ENCODE measurements at regions of chr3 and their contacts with region 1.

Region 1: DNA sequence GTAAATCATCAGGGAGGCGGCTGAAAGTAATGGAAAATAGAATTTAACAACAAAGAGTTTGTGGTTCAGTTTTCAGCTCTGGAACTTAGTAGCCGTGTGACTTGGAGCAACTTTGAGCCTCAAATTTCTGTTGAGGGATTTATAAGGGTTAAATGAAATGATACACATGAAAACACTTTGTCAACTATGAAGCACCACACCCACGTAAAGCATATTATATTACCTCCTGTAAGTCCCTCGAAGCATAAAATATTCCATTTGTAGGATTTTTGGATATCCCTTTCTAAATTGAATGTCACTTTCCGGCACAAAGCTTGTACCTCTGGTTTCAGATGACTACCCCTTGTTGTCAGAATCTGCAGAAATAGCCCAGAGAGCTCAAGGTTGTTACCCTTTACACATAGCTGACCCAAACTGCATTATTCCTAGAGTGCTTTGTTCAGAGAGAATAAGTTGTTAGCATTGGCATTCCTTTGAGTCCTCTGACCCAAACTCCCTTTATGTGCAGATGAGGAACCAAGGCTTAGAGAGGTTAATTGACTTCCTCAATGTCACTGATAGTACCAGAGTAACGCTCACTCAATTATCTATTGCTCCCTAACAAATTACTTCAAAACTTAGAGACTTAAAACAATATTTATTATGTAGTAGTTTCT is 187.9 kb upstream of the UMPS start:
- DNase-seq: no peak
- ATAC-seq: no peak
- H3K4me3 ChIP-seq: no peak overlapping the region
- H3K27ac ChIP-seq: no peak overlapping the region
- H3K4me1 ChIP-seq: peaks cover 0 to 13% (median 0%) of the 10 kb centered on the region in 9 donors
- H3K27me3 ChIP-seq: no peaks in the 10 kb centered on the region
- CTCF ChIP-seq: no peak

Region 2: DNA sequence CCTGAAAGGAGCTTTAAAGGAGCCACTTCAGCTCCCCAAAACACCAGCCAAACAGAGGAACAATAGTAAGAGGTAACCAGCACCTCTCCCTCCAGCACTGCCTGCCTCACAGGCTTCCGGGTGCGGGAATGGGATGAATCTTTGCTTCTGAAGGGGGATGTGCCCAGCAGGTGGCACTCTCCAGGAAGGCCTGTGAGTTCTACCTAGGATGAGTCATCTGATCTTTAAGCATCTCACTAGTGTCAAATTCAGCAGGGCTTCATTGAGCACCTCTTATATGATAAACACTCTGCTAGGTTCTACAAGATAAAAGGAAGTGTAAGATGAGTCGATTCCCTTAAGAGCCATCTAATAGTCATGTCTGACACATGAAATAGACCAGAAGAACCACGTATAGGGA is 49.5 kb before region 1 on chr3:
- intact Hi-C with region 1: loop called in 3 of 10 experiments (anchors 5 to 10 kb)
- DNase-seq: peak in 1 of 2 donors; percentile 23
- ATAC-seq: peak in 7 of 8 donors; percentile 35 to 74 (median 61)
- H3K4me3 ChIP-seq: no peak overlapping the region
- H3K27ac ChIP-seq: no peak overlapping the region
- H3K4me1 ChIP-seq: peaks cover 0 to 8% (median 0%) of the 10 kb centered on the region in 9 donors
- H3K27me3 ChIP-seq: no peaks in the 10 kb centered on the region
- CTCF ChIP-seq: peak in 8 of 9 donors; percentile 12 to 58 (median 46)

Region 3: GRCh38 chr3:124504332-124505059 is 37.8 kb before region 1 on chr3:
- intact Hi-C with region 1: loop called in 2 of 10 experiments (anchors 5 to 10 kb)
- DNase-seq: peak; percentile 20 to 27
- ATAC-seq: peak; percentile 66 to 97 (median 88)
- H3K4me3 ChIP-seq: no peak overlapping the region
- H3K27ac ChIP-seq: peak overlapping the region in 4 of 10 donors; percentile 16 to 22 (median 20)
- H3K4me1 ChIP-seq: peaks cover 0 to 14% (median 6%) of the 10 kb centered on the region in 9 donors
- H3K27me3 ChIP-seq: no peaks in the 10 kb centered on the region
- CTCF ChIP-seq: no peak

Region 4: GRCh38 chr3:124520970-124521369 is 21.4 kb before region 1 on chr3:
- intact Hi-C with region 1: no loop called
- DNase-seq: no peak
- ATAC-seq: no peak
- H3K4me3 ChIP-seq: no peak overlapping the region
- H3K27ac ChIP-seq: no peak overlapping the region
- H3K4me1 ChIP-seq: no peaks in the 10 kb centered on the region
- H3K27me3 ChIP-seq: no peaks in the 10 kb centered on the region
- CTCF ChIP-seq: no peak